Right lobe of liver (tissue), 6 donors: ENCODE measurements at regions of chr7 and their contacts with region 1.

Region 1: GRCh38 chr7:55415173-55415778 is 50.1 kb downstream of the LANCL2 start:
- DNase-seq: peak; percentile 73 to 80 (median 77)
- ATAC-seq: peak; percentile 85 to 94 (median 90)
- H3K4me3 ChIP-seq: no peak overlapping the region
- H3K27ac ChIP-seq: no peak overlapping the region
- H3K4me1 ChIP-seq: peaks cover 0 to 18% (median 0%) of the 10 kb centered on the region in 4 donors
- H3K27me3 ChIP-seq: no peaks in the 10 kb centered on the region
- CTCF ChIP-seq: peak; percentile 75 to 91 (median 89)
- POLR2A ChIP-seq: no peak

Region 2: DNA sequence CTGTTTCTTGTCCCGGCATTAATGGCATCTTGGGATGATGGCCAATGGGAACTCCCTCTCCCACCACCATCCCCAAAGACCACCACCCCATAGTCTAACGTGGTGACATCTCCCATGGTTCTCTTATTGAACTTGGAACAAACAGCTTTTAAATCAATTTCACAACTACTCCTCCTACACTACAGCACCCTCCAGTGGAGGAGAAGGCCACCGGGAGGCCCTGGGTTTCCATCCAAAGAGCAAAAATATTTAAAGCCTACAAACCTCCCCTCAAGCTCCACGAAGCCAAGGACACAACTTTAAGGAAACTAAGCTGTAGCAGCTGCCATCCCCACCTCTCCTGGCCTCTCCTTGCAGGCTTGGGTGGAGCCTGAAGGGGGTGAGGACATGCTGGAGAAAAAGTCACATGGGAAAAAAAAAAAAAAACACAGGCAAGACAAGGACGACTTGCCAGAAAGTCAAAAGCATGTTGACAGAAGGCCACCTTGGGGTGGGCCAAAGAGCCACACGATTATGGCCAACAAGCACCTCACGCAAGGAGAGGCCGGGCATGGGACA is 144.1 kb before region 1 on chr7:
- intact Hi-C with region 1: loop called (anchors 5 to 10 kb)
- DNase-seq: no peak
- ATAC-seq: peak in 2 of 4 donors; percentile 36 to 48
- H3K4me3 ChIP-seq: no peak overlapping the region
- H3K27ac ChIP-seq: no peak overlapping the region
- H3K4me1 ChIP-seq: no peaks in the 10 kb centered on the region
- H3K27me3 ChIP-seq: no peaks in the 10 kb centered on the region
- CTCF ChIP-seq: peak; percentile 13 to 35 (median 29)
- POLR2A ChIP-seq: no peak

Region 3: GRCh38 chr7:55279080-55279845 is 136.0 kb before region 1 on chr7:
- intact Hi-C with region 1: loop called (anchors 5 to 10 kb)
- DNase-seq: no peak
- ATAC-seq: peak in 1 of 4 donors; percentile 11
- H3K4me3 ChIP-seq: no peak overlapping the region
- H3K27ac ChIP-seq: no peak overlapping the region
- H3K4me1 ChIP-seq: no peaks in the 10 kb centered on the region
- H3K27me3 ChIP-seq: no peaks in the 10 kb centered on the region
- CTCF ChIP-seq: no peak
- POLR2A ChIP-seq: no peak